ENCODE measurements at regions of chr1 and their contacts with region 1.

Region 1: GRCh38 chr1:85259118-85259911 is at the start of gene C1orf52:
- DNase-seq: no peak
- ATAC-seq: peak; percentile 96
- H3K4me3 ChIP-seq: peak within 1 kb of the TSS; percentile 99
- H3K27ac ChIP-seq: peak within 1 kb of the TSS; percentile 69
- H3K4me1 ChIP-seq: no peaks in the 10 kb centered on the region
- H3K27me3 ChIP-seq: no peaks in the 10 kb centered on the region
- CTCF ChIP-seq: peak; percentile 90 to 98 (median 95)
- EP300 ChIP-seq: no peak
- POLR2A ChIP-seq: peak; percentile 98
- RAD21 ChIP-seq: peak; percentile 62
- polyA plus RNA-seq, gene C1orf52: 9.4 to 17.1 TPM

Region 2: DNA sequence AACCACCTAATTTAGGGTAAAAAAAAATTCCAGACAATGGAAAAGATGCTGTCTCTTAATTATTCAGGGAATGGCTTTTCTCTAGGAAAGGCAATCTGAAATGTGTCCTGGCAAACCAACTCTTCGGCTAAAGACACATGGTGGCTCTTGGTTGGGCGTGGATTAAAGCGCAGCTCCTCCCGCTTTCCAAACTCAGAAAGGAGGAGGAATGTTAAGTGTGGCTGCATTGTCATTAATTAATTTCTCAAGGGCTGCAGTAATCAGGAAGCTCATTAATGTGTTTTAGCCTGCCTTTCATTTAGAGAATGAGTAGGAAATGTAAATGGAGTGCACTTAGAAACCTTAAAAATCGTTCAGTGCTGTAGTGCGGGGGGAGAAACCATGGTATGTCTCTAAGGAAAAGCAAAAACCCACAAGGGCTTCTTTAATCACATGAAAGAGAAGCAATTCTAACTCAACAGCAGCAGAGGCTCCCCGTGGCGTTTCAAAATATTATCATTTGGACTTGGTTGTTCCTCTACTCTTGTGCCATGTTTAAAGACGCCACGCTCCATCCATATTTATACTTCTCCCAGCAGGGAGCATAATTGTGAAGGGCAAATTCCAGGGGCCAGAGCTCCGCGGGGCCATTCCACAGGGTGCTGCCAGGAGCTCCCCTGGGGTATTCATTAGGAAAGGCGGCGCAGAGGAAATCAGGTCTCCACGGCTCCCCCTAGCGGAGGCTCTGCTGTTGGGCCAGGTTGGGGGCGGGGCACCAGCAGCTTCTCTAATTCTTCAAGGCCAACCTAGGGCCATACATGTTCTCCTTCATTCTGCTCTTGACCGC is 477.2 kb before region 1 on chr1:
- CTCF ChIA-PET with region 1: interaction called, 5 read pairs
- POLR2A ChIA-PET with region 1: no interaction called
- RAD21 ChIA-PET with region 1: no interaction called
- SMC1A ChIA-PET with region 1: no interaction called
- in situ Hi-C with region 1: no loop called
- intact Hi-C with region 1: loop called (anchors 5 kb)
- DNase-seq: no peak
- ATAC-seq: peak; percentile 97
- H3K4me3 ChIP-seq: no peak overlapping the region
- H3K27ac ChIP-seq: no peak overlapping the region
- H3K4me1 ChIP-seq: no peaks in the 10 kb centered on the region
- H3K27me3 ChIP-seq: peaks cover 0 to 4% of the 10 kb centered on the region in 2 experiments; a peak in 1 of 4 replicates
- CTCF ChIP-seq: peak; percentile 76 to 89 (median 84)
- EP300 ChIP-seq: no peak
- POLR2A ChIP-seq: no peak
- RAD21 ChIP-seq: peak; percentile 57

Region 3: DNA sequence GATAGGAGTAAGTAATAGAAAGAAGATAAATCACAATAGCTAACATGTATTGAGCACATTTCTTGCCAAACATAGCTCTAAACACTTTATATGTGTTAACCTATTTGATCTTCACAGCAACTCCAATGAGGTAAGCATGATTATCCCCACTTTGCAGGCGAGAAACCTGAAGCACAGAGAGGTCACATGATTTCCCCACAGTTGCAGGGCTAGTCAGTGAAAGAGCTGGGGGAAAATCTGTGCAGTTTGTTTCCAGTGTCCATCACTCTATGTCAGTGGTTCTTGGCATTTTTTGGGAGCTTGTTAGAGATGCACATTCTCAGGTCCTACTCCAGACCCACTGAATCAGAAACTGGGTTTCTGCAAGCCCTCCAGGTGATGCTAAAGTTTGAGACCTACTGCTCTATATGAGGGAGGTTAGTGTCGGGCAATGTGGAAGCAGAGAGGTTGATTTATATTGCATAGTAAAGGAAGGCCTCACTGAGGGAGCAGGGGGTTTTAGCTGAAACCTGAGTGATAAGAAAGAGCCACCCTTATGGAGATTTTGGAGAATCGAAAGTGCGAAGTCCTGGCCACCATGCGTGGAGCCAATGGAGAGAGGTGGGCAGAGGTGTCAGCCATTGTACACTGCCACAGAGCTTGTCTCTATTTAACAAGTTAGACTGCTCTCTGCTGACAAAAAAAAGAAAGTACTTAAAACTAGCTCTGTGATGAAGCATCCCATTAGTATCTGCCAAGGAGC is 231.9 kb before region 1 on chr1:
- CTCF ChIA-PET with region 1: interaction called, 26 read pairs
- POLR2A ChIA-PET with region 1: no interaction called
- RAD21 ChIA-PET with region 1: interaction called, 24 read pairs
- SMC1A ChIA-PET with region 1: interaction called, 8 read pairs
- in situ Hi-C with region 1: no loop called
- intact Hi-C with region 1: no loop called
- DNase-seq: no peak
- ATAC-seq: peak; percentile 96
- H3K4me3 ChIP-seq: no peak overlapping the region
- H3K27ac ChIP-seq: no peak overlapping the region
- H3K4me1 ChIP-seq: no peaks in the 10 kb centered on the region
- H3K27me3 ChIP-seq: no peaks in the 10 kb centered on the region
- CTCF ChIP-seq: peak; percentile 31 to 62 (median 33); a peak in 4 of 6 replicates
- EP300 ChIP-seq: no peak
- POLR2A ChIP-seq: no peak
- RAD21 ChIP-seq: peak; percentile 72

Region 4: DNA sequence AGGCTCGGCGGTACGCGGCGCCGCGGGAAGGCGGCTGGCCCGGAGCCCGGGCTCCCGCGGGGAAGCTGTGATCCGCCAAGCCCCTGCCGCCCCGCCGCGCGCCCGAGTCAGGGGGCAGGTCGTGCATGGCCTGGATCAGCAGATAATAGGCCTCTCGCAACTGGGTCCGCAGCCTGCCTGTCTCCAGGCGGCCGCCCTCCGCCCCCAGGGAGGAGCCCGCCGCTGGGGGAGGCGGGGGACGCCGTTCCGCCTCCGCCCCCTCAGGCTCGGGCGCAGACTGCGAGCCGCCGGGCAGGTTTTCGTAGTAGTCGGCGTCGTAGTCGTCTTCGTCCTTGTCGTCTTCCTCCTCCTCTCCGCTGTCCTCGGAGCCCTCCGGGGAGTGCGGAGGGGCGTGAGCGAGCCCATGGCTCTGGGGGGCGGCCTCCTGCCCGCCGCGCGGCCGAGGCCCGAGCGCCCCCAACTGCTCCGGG is 58.4 kb before region 1 on chr1 and contains the start of gene SYDE2:
- CTCF ChIA-PET with region 1: interaction called, 6 read pairs
- POLR2A ChIA-PET with region 1: no interaction called
- RAD21 ChIA-PET with region 1: no interaction called
- SMC1A ChIA-PET with region 1: no interaction called
- in situ Hi-C with region 1: no loop called
- intact Hi-C with region 1: loop called (anchors 5 kb)
- DNase-seq: no peak
- ATAC-seq: peak; percentile 82
- H3K4me3 ChIP-seq: peak within 1 kb of the TSS; percentile 78
- H3K27ac ChIP-seq: peak within 1 kb of the TSS; percentile 52
- H3K4me1 ChIP-seq: no peaks in the 10 kb centered on the region
- H3K27me3 ChIP-seq: peaks cover 0 to 3% of the 10 kb centered on the region in 2 experiments; a peak in 3 of 4 replicates
- CTCF ChIP-seq: no peak
- EP300 ChIP-seq: no peak
- POLR2A ChIP-seq: peak; percentile 83
- RAD21 ChIP-seq: no peak
- polyA plus RNA-seq, gene SYDE2: 0.37 to 0.50 TPM

Region 5: GRCh38 chr1:85240174-85240601 is 19.1 kb before region 1 on chr1:
- CTCF ChIA-PET with region 1: interaction called, 11 read pairs
- POLR2A ChIA-PET with region 1: interaction called, 3 read pairs
- RAD21 ChIA-PET with region 1: interaction called, 3 read pairs
- SMC1A ChIA-PET with region 1: interaction called, 7 read pairs
- in situ Hi-C with region 1: no loop called
- intact Hi-C with region 1: no loop called
- DNase-seq: no peak
- ATAC-seq: peak; percentile 85
- H3K4me3 ChIP-seq: no peak overlapping the region
- H3K27ac ChIP-seq: no peak overlapping the region
- H3K4me1 ChIP-seq: no peaks in the 10 kb centered on the region
- H3K27me3 ChIP-seq: no peaks in the 10 kb centered on the region
- CTCF ChIP-seq: peak; percentile 12 to 45 (median 35); a peak in 5 of 6 replicates
- EP300 ChIP-seq: no peak
- POLR2A ChIP-seq: no peak
- RAD21 ChIP-seq: peak; percentile 66

Measured in GM12878 (cell line).